Activated CD4-positive, alpha-beta memory T cell treated with anti-CD3 and anti-CD28 coated beads, Interleukin-2, amount 10 ng/mL, durations not matched to agents 7 days and 5 days (primary cell): ENCODE measurements at regions of chr1 and their contacts with region 1.

Region 1: DNA sequence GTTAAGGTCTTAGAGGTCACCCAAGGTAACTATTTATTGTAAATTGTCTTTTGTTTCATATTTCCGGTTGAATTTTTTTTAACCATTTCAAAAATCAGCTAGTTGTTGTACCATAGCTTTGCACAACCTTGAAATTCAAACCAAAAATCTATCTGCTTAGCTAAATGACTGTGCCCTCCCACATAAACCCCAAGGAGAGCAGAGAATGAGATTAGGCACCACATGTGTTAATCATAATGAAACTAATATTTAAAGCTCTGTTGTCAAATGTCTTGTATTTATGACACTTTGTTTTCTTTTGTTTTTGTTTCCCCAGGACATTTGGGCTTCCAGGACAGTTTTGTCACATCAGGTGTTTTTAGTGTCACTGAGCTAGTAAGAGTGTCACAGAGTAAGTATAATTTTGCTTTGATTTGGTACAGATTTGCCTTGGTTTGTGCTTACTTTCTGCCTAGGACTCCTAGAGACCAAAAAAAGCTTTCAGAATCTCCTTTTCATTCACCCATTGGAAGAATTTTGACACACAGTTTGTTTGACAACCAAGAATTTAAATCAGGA is 249.9 kb downstream of the NFIA start:
- DNase-seq: no peak
- H3K4me3 Mint-ChIP-seq: no peak overlapping the region
- H3K27ac Mint-ChIP-seq: peak overlapping the region; percentile 58
- H3K4me1 Mint-ChIP-seq: peaks cover 23% of the 10 kb centered on the region
- H3K27me3 Mint-ChIP-seq: no peaks in the 10 kb centered on the region

Region 2: GRCh38 chr1:61202854-61203598 is 129.2 kb before region 1 on chr1:
- CTCF ChIA-PET with region 1: no interaction called
- POLR2A ChIA-PET with region 1: no interaction called
- DNase-seq: no peak
- H3K4me3 Mint-ChIP-seq: no peak overlapping the region
- H3K27ac Mint-ChIP-seq: no peak overlapping the region
- H3K4me1 Mint-ChIP-seq: no peaks in the 10 kb centered on the region
- H3K27me3 Mint-ChIP-seq: no peaks in the 10 kb centered on the region

Region 3: GRCh38 chr1:61318319-61319125 is 13.8 kb before region 1 on chr1:
- CTCF ChIA-PET with region 1: interaction called, 6 read pairs
- POLR2A ChIA-PET with region 1: interaction called, 18 read pairs
- DNase-seq: peak; percentile 34
- H3K4me3 Mint-ChIP-seq: peak overlapping the region; percentile 31
- H3K27ac Mint-ChIP-seq: peak overlapping the region; percentile 56
- H3K4me1 Mint-ChIP-seq: peaks cover 32% of the 10 kb centered on the region
- H3K27me3 Mint-ChIP-seq: no peaks in the 10 kb centered on the region